ENCODE measurements at regions of chr1 and their contacts with region 1.

Region 1: GRCh38 chr1:3796215-3797061 is at the start of gene LRRC47:
- DNase-seq: peak; percentile 93 to 96 (median 95)
- H3K4me3 ChIP-seq: peak within 1 kb of the TSS; percentile 70 to 100 (median 84)
- H3K27ac ChIP-seq: peak within 1 kb of the TSS in 4 of 5 donors; percentile 65 to 90 (median 67)
- H3K4me1 ChIP-seq: peaks cover 25 to 36% of the 10 kb centered on the region in 2 donors
- H3K27me3 ChIP-seq: no peaks in the 10 kb centered on the region
- CTCF ChIP-seq: peak in 3 of 6 experiments; percentile 2 to 16 (median 11)
- POLR2A ChIP-seq: peak; percentile 44 to 79
- total RNA-seq, gene LRRC47: 34.8 to 58.3 (median 47.0) TPM

Region 2: DNA sequence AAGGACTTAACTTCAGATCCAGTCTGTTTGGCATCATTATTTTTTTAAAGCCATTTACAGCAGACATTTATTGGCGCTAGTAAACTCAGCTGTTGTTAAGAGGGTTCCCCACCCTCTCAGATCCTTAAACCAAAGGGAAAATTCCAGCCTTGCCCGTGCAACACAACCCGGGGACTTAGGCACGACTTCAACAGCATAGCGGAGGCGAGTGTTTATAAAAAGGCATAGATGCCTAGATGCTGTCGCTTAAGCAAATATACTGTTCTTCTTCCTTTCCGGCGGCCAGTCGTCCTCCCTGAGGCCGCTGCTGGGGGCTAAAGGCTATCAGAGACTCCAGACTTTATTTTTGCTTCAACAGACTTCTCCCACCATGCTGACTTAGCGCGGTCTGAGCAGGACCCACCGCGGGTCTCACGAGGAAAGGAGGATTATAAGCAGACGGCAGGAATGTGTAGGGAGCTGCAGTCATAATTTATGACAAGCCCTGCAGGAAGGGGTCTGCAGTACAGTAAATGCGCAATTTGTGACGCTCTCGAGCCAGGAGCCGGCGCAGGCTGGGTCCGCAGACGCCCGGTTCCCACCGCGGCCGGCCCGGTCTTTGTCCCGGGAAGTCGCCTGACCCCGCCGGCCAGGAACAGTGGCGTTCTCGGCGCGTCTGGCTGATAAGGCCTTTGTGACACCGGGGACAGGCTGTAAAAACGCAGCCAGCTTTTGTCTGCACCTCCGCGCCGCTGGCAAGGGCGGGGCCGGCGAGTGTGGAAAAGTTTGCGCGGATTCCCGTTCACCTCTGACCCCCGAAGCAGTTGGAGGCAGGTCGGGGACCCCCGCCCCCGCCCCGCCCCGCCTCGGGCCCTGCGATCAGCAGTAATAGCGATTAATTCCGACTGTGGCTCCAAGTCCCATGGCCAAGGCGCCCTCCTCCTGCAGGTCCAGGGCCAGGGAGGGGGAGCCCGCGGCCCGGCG is 403.1 kb before region 1 on chr1:
- intact Hi-C with region 1: no loop called
- DNase-seq: peak in 3 of 7 donors; percentile 19 to 57 (median 26)
- H3K4me3 ChIP-seq: no peak overlapping the region
- H3K27ac ChIP-seq: no peak overlapping the region
- H3K4me1 ChIP-seq: no peaks in the 10 kb centered on the region
- H3K27me3 ChIP-seq: peaks cover 59% of the 10 kb centered on the region
- CTCF ChIP-seq: no peak
- POLR2A ChIP-seq: no peak

Region 3: GRCh38 chr1:3518256-3518655 is 278.2 kb before region 1 on chr1:
- intact Hi-C with region 1: no loop called
- DNase-seq: no peak
- H3K4me3 ChIP-seq: no peak overlapping the region
- H3K27ac ChIP-seq: no peak overlapping the region
- H3K4me1 ChIP-seq: no peaks in the 10 kb centered on the region
- H3K27me3 ChIP-seq: no peaks in the 10 kb centered on the region
- CTCF ChIP-seq: peak in 4 of 6 experiments; percentile 21 to 48 (median 40)
- POLR2A ChIP-seq: no peak

Region 4: GRCh38 chr1:3746830-3747521 is 49.5 kb before region 1 on chr1:
- intact Hi-C with region 1: loop called in 1 of 2 experiments (anchors 10 kb)
- DNase-seq: peak; percentile 80 to 92 (median 87)
- H3K4me3 ChIP-seq: peak overlapping the region; percentile 44 to 89 (median 68)
- H3K27ac ChIP-seq: peak overlapping the region in 3 of 5 donors; percentile 28 to 68 (median 67)
- H3K4me1 ChIP-seq: peaks cover 7 to 20% of the 10 kb centered on the region in 2 donors
- H3K27me3 ChIP-seq: no peaks in the 10 kb centered on the region
- CTCF ChIP-seq: no peak
- POLR2A ChIP-seq: peak in 1 of 2 donors; percentile 53